Activated CD4-positive, alpha-beta memory T cell treated with anti-CD3 and anti-CD28 coated beads for 36 hours (primary cell): ENCODE measurements at regions of chr14 and their contacts with region 1.

Region 1: GRCh38 chr14:73851644-73852382 is at the start of gene PTGR2:
- DNase-seq: peak; percentile 92
- H3K4me3 Mint-ChIP-seq: peak within 1 kb of the TSS; percentile 98
- H3K27ac Mint-ChIP-seq: peak within 1 kb of the TSS; percentile 98
- H3K4me1 Mint-ChIP-seq: peaks cover 21% of the 10 kb centered on the region
- H3K27me3 Mint-ChIP-seq: no peaks in the 10 kb centered on the region
- total RNA-seq, gene PTGR2: 9.9 to 10.3 TPM

Region 2: DNA sequence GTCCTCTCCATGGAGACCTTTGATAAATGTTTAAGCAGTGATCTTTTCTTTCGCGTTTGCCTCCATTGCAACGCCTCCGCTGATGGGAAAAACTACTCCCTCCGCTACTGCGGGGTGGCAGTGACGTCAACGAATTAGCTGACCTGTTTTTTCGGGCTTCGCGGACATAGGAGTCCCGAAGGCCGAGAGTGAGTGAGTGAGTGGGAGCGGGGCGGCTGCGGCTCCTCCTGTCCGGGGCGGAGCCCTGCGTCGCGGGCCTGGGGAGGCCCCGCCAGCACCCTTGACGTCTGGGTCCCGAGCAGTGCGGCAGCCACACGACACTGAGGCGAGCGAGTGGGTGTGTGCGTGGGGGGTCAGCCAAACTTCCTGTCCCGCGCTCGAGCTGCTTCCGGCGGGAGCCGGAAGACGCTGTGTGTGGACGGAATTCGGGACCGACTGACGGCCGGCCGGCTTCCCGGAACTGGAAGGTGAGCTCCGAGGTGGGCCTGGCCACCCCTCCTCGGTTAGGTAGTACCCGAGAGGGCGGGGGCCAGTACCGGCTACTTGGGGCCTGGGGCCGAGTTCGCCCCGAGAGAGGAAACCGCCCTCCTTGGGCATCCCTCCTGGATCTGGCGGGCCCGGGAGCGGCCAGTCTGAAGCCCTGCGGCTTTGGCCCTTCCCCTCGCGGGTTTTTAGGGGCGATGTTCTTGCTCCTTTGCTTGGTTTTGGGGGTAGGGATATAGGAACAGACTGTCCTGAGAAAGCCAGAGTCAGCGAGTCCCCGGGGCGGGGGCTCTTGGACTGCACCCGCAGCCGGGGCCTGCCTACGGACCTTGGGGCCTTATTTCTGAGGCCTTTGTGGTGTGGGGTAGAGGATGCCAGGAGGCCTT is 34.9 kb after region 1 on chr14 and contains the start of gene ZNF410:
- CTCF ChIA-PET with region 1: interaction called, 4 read pairs
- POLR2A ChIA-PET with region 1: interaction called, 10 read pairs
- intact Hi-C with region 1: loop called (anchors 1 kb)
- DNase-seq: peak; percentile 97
- H3K4me3 Mint-ChIP-seq: peak within 1 kb of the TSS; percentile 93
- H3K27ac Mint-ChIP-seq: peak within 1 kb of the TSS; percentile 95
- H3K4me1 Mint-ChIP-seq: peaks cover 47% of the 10 kb centered on the region
- H3K27me3 Mint-ChIP-seq: no peaks in the 10 kb centered on the region
- total RNA-seq, gene ZNF410: 65.2 to 68.7 TPM

Region 3: GRCh38 chr14:75050852-75051554 is 1199.2 kb after region 1 on chr14 and contains the start of gene MLH3:
- CTCF ChIA-PET with region 1: no interaction called
- POLR2A ChIA-PET with region 1: no interaction called
- intact Hi-C with region 1: no loop called
- DNase-seq: peak; percentile 82
- H3K4me3 Mint-ChIP-seq: peak within 1 kb of the TSS; percentile 92
- H3K27ac Mint-ChIP-seq: peak within 1 kb of the TSS; percentile 86
- H3K4me1 Mint-ChIP-seq: peaks cover 70% of the 10 kb centered on the region
- H3K27me3 Mint-ChIP-seq: no peaks in the 10 kb centered on the region
- total RNA-seq, gene MLH3: 19.7 to 21.2 TPM